Right lobe of liver (tissue), 6 donors: ENCODE measurements at regions of chr10 and their contacts with region 1.

Region 1: GRCh38 chr10:99248824-99249223 is 13.2 kb upstream of the HPSE2 start:
- DNase-seq: no peak
- ATAC-seq: no peak
- H3K4me3 ChIP-seq: no peak overlapping the region
- H3K27ac ChIP-seq: no peak overlapping the region
- H3K4me1 ChIP-seq: no peaks in the 10 kb centered on the region
- H3K27me3 ChIP-seq: no peaks in the 10 kb centered on the region
- CTCF ChIP-seq: no peak
- POLR2A ChIP-seq: no peak

Region 2: GRCh38 chr10:98474628-98475027 is 774.2 kb before region 1 on chr10:
- intact Hi-C with region 1: loop called in 1 of 2 experiments (anchors 10 kb)
- DNase-seq: no peak
- ATAC-seq: no peak
- H3K4me3 ChIP-seq: no peak overlapping the region
- H3K27ac ChIP-seq: no peak overlapping the region
- H3K4me1 ChIP-seq: no peaks in the 10 kb centered on the region
- H3K27me3 ChIP-seq: no peaks in the 10 kb centered on the region
- CTCF ChIP-seq: no peak
- POLR2A ChIP-seq: no peak

Region 3: DNA sequence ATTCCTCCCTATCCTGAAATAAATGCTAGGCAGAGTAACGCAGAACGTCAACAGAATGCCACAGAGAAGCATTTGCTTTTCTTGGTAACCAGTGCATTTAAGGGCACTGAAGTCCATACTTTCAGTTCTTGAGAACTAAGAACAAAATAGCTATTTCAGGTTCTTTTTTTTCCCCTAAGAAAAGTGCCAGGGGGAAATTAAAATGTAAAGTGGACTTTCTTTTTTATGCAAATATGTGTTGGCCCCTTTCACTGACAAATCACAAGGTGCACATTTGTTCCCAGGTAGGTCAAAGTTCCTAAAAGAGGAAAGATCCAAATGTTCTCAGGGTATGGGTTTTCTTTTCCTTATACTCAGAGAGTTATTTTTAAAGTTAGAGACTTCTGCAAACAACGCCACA is 164.7 kb before region 1 on chr10:
- intact Hi-C with region 1: no loop called
- DNase-seq: no peak
- ATAC-seq: no peak
- H3K4me3 ChIP-seq: no peak overlapping the region
- H3K27ac ChIP-seq: no peak overlapping the region
- H3K4me1 ChIP-seq: no peaks in the 10 kb centered on the region
- H3K27me3 ChIP-seq: no peaks in the 10 kb centered on the region
- CTCF ChIP-seq: no peak
- POLR2A ChIP-seq: no peak